Dorsolateral prefrontal cortex (tissue), 120 donors: ENCODE measurements at regions of chr16 and their contacts with region 1.

Region 1: GRCh38 chr16:69754469-69755310 is at the start of gene NOB1:
- DNase-seq: peak; percentile 92 to 97 (median 96)
- H3K4me3 ChIP-seq: peak within 1 kb of the TSS; percentile 52 to 100 (median 90)
- H3K27ac ChIP-seq: peak within 1 kb of the TSS in 54 of 59 donors; percentile 27 to 95 (median 72)
- H3K27me3 ChIP-seq: no peaks in the 10 kb centered on the region
- CTCF ChIP-seq: peak; percentile 96 to 100 (median 99)
- total RNA-seq, gene NOB1: 19.8 to 37.5 (median 27.3) TPM

Region 2: DNA sequence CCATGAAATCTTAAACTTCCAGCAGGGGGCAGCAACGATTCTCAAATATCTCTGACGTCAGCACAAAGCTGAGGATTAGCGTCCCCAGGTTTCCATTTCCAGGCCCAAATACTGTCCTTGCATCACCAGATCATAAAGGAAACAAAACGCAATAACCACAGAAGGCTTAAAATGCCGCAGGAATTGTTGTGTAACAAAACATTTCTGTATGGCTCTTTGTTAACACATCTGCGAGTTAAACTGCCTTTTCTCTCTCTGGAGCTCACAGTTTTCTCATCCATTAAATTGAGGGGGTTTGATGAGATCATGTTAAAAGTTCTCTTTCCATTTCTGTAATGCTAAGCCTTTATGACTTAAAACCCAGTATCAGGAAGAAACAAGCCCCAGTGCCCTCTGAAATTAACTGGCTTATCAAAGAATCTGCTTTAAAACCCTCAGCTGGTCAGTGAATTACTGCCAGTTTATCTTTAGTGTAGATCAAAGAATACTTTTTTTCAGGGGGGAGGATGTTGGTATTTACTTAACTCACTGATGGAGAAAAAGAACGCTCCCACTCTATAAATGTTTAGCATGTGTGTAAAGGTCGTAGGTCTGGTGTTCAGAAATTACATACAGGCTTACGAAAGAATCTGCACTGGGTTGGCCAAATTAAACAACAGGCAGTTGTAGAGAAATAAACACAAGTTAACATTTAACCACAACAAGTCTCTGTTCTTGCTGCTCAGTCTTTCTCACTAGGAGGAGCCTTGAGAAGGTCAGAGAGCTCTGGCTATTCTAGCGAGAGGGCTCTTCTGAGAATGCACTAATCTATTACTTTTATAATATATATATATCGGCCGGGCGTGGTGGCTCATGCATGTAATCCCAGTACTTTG is 358.3 kb before region 1 on chr16:
- intact Hi-C with region 1: loop called (anchors 2 to 5 kb)
- DNase-seq: peak in 7 of 10 donors; percentile 49 to 81 (median 66)
- H3K4me3 ChIP-seq: peak overlapping the region in 23 of 59 donors; percentile 1 to 41 (median 18)
- H3K27ac ChIP-seq: peak overlapping the region; percentile 17 to 95 (median 83)
- H3K27me3 ChIP-seq: no peaks in the 10 kb centered on the region
- CTCF ChIP-seq: peak; percentile 69 to 92 (median 82)

Region 3: DNA sequence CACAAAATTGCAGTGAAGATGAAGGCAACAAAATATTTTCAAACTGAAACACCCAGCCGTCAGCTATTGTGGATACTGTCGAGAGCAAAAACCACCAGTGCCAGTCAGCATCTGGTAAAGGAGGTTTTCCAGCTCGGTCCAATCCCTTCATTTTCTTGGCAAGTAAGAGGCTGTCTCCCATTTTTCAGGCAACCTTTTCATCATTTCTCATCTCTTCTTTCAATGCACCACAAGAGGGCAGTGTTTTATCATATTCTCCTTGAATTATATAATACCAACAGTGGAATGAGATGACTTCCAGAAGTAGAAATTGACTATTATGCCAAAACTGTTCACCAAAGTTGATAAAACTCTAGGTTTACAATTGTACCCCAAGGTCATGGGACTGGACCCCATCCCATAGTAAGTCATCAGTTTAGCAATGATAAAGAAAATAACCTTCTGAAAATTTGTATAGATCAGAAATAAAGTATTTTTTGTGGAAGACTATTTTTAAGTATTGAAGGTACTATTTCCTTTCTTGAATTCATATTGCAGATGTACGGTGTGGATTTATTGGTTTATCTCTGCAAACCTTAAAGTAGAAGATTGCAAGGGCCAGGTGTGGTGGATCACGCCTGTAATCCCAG is 45.1 kb before region 1 on chr16:
- intact Hi-C with region 1: loop called (anchors 2 kb)
- DNase-seq: no peak
- H3K4me3 ChIP-seq: peak overlapping the region in 1 of 59 donors; percentile 26
- H3K27ac ChIP-seq: peak overlapping the region in 57 of 59 donors; percentile 1 to 87 (median 72)
- H3K27me3 ChIP-seq: no peaks in the 10 kb centered on the region
- CTCF ChIP-seq: peak; percentile 69 to 93 (median 86)

Region 4: DNA sequence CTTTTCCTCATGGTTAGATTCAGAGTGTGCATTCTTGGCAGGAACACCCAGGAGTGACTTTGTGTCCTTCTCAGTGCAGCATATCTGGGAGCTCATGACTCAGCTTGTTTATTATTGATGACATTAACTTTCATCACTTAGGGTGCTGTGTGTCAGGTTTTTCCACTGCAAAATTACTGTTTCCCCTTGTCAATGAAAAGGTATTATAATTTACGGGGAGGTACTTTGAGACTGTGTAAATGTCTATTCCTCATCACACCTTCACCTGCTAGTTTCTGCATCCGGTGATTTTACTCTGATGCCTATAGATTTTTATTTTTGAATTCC is 58.0 kb after region 1 on chr16:
- intact Hi-C with region 1: no loop called
- DNase-seq: no peak
- H3K4me3 ChIP-seq: no peak overlapping the region
- H3K27ac ChIP-seq: no peak overlapping the region
- H3K27me3 ChIP-seq: no peaks in the 10 kb centered on the region
- CTCF ChIP-seq: no peak

Region 5: GRCh38 chr16:69917739-69918138 is 163.0 kb after region 1 on chr16:
- intact Hi-C with region 1: no loop called
- DNase-seq: peak in 1 of 10 donors; percentile 61
- H3K4me3 ChIP-seq: peak overlapping the region in 1 of 59 donors; percentile 10
- H3K27ac ChIP-seq: peak overlapping the region in 47 of 59 donors; percentile 2 to 83 (median 50)
- H3K27me3 ChIP-seq: no peaks in the 10 kb centered on the region
- CTCF ChIP-seq: no peak

Region 6: DNA sequence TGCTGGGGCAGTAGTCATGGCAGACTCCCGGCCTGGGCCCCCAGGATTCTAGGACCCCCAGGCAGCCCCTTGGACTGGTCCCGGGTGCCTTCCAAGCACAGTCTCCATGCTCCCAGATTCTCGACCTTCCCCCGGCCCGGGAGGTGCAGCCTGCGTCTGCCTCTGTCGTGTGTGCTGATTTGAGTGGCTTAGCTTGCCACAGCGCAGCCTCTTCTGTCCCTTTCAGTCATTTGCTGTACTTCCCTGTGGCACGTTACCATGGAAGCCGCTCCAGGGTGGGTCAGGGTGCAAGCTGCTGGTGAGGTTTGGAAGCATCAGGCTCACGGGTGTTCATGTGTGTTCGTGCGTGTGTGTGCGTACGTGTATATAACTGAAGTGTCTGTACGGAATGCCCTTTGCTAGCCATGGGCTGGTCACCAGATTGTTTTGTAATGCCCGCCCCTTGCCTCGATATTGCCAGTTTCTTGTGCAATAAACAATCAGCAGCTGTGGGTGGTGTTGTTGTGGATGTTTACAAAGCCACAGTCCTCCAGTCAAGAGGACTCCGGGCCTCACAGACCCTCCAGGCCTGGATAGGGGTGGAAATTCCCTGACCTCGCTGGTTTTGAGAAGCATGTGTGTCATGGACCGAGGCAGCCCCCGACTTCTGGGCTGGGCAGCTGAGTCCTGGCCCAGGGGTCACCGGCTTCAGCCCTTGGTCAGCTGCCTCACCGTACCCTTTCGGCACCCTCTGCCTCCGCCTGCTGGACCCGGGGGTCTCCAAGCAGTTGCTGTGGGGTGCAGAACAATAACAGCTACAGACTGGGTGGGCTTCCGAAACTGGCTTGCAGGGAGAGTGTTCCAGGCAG is 186.8 kb after region 1 on chr16:
- intact Hi-C with region 1: no loop called
- DNase-seq: peak in 1 of 10 donors; percentile 1
- H3K4me3 ChIP-seq: no peak overlapping the region
- H3K27ac ChIP-seq: peak overlapping the region in 3 of 59 donors; percentile 2 to 56 (median 17)
- H3K27me3 ChIP-seq: no peaks in the 10 kb centered on the region
- CTCF ChIP-seq: no peak